Ovary (tissue), 10 donors: ENCODE measurements at regions of chr16 and their contacts with region 1.

Region 1: GRCh38 chr16:87416826-87417527 is 24.8 kb downstream of the MAP1LC3B start:
- DNase-seq: peak in 3 of 5 donors; percentile 21 to 56 (median 53)
- H3K4me3 ChIP-seq: no peak overlapping the region
- H3K27ac ChIP-seq: no peak overlapping the region
- H3K4me1 ChIP-seq: no peaks in the 10 kb centered on the region
- H3K27me3 ChIP-seq: no peaks in the 10 kb centered on the region
- CTCF ChIP-seq: peak; percentile 11 to 59 (median 48)
- EP300 ChIP-seq: no peak
- POLR2A ChIP-seq: no peak

Region 2: DNA sequence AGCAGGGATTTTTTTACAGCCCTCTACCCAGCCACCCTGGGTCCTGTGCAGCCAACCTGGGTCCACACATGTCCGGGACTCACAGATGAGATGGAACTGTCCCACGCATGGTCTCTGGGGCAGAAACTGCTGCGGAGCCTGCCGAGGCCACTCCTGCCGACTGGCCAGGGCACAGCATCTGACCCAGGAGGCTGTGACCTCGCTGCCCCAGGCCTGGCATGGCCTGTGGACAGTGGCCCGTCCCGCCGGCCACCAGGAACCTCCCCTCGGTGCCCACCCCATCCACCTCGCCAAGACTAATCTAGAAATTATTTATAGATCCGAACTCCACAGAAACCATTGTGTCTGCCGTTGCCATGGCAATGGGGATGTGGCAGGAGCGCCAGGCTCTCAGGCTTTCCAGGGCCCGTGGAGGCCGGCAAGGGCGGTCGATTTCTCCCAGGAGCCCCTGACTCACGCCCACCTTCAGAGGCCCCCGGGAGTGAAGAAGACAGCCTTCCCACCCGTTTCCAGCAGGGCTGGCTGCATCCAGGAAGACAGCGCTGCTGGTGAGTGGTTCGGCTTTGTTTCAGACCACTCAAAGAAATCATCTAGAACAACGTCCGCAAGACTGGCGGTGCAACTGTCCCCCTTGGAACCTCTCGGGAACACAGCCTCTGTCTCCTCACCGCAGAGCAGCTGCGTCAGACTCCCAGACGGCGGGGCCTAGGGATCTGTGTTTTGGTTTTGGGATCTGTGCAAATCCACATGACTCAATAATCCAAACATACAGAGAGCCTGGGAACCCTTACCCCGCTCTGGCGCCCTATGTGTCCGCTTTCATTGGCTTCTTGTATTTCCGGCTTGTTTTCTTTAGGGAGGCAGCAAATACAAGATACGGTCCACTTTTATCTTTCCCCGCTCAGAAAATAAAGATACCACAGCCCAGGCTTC is 124.2 kb after region 1 on chr16:
- intact Hi-C with region 1: loop called in 1 of 4 experiments (anchors 10 kb)
- DNase-seq: peak; percentile 35 to 69 (median 62)
- H3K4me3 ChIP-seq: no peak overlapping the region
- H3K27ac ChIP-seq: peak overlapping the region in 1 of 2 donors; percentile 28
- H3K4me1 ChIP-seq: peaks cover 8% of the 10 kb centered on the region
- H3K27me3 ChIP-seq: no peaks in the 10 kb centered on the region
- CTCF ChIP-seq: no peak
- EP300 ChIP-seq: no peak
- POLR2A ChIP-seq: no peak

Region 3: GRCh38 chr16:87571136-87571867 is 154.3 kb after region 1 on chr16:
- intact Hi-C with region 1: loop called in 1 of 4 experiments (anchors 10 kb)
- DNase-seq: peak; percentile 44 to 68 (median 51)
- H3K4me3 ChIP-seq: no peak overlapping the region
- H3K27ac ChIP-seq: no peak overlapping the region
- H3K4me1 ChIP-seq: peaks cover 9% of the 10 kb centered on the region
- H3K27me3 ChIP-seq: no peaks in the 10 kb centered on the region
- CTCF ChIP-seq: peak in 2 of 3 donors; percentile 38 to 39
- EP300 ChIP-seq: no peak
- POLR2A ChIP-seq: no peak

Region 4: DNA sequence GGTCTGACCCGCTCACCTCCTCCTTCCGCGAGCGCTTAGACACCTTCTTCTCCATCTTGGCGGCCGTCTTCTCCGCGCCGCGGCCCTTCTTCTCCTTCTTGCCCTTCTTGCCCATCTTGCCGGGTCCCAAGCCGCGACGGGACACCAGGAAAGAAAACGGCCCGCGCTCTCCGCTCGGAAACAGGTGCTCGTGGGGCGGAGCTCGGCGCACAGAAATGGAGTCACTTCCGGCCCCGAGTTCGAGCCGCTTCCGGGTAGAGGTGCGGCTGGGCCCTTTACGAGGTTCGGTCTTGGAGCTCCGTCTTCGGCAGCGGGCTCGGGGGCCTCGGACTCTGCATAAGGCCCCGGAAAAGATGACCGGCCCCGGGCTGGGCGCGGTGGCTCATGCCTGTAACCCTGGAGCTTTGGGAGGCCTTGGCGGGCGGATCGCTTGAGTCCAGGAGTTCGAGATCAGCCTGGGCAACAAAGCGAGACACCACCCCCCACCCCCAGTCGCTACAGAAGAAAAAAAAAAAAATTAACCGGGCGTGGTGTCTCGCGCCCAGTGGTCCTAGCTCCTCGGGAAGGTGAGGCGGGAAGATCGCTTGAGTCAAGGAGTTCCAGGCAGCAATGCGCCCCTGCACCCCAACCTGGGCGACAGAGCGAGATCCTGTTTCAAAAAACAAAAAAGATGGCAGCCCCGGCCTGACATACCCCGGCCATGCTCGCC is 349.0 kb after region 1 on chr16 and contains the start of gene KLHDC4:
- intact Hi-C with region 1: loop called in 1 of 4 experiments (anchors 10 kb)
- DNase-seq: peak; percentile 83 to 93 (median 88)
- H3K4me3 ChIP-seq: peak within 1 kb of the TSS; percentile 90
- H3K27ac ChIP-seq: peak within 1 kb of the TSS; percentile 20 to 62
- H3K4me1 ChIP-seq: peaks cover 10% of the 10 kb centered on the region
- H3K27me3 ChIP-seq: no peaks in the 10 kb centered on the region
- CTCF ChIP-seq: peak in 1 of 3 donors; percentile 6
- EP300 ChIP-seq: no peak
- POLR2A ChIP-seq: peak; percentile 74
- total RNA-seq, gene KLHDC4: 24.1 to 35.9 (median 30.5) TPM